Calu3 (cell line): ENCODE measurements at regions of chr2 and their contacts with region 1.

Region 1: DNA sequence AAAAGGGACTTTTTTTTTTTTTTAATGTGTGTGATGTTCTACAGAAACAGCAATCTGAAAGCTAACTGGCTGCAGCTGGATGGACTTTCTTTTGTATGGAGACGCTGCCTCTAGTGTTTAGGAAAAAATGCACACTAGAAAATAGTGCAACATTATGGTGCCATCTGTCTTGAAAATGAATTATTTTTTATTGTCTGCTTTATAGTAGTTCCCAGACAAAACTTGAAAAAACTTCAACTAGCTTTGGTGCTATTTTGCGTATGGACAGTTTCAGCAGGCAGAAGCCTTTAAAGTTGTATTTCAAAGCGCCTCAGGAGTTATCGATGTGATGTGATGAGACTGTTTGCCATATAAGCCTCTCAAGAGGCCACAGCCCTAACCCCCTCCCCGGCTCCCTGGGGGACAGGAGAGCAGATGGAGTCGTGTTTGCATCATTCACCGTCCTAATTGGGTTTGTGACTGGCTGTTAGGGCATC is 86.9 kb downstream of the LTBP1 start:
- DNase-seq: peak; percentile 10
- H3K4me3 Mint-ChIP-seq: no peak overlapping the region
- H3K27ac Mint-ChIP-seq: no peak overlapping the region
- H3K4me1 Mint-ChIP-seq: no peaks in the 10 kb centered on the region
- H3K27me3 Mint-ChIP-seq: no peaks in the 10 kb centered on the region
- CTCF ChIP-seq: no peak

Region 2: GRCh38 chr2:32553829-32554432 is 479.7 kb before region 1 on chr2:
- CTCF ChIA-PET with region 1: interaction called, 4 read pairs
- intact Hi-C with region 1: loop called (anchors 5 kb)
- DNase-seq: peak; percentile 2
- H3K4me3 Mint-ChIP-seq: no peak overlapping the region
- H3K27ac Mint-ChIP-seq: no peak overlapping the region
- H3K4me1 Mint-ChIP-seq: no peaks in the 10 kb centered on the region
- H3K27me3 Mint-ChIP-seq: no peaks in the 10 kb centered on the region
- CTCF ChIP-seq: no peak

Region 3: DNA sequence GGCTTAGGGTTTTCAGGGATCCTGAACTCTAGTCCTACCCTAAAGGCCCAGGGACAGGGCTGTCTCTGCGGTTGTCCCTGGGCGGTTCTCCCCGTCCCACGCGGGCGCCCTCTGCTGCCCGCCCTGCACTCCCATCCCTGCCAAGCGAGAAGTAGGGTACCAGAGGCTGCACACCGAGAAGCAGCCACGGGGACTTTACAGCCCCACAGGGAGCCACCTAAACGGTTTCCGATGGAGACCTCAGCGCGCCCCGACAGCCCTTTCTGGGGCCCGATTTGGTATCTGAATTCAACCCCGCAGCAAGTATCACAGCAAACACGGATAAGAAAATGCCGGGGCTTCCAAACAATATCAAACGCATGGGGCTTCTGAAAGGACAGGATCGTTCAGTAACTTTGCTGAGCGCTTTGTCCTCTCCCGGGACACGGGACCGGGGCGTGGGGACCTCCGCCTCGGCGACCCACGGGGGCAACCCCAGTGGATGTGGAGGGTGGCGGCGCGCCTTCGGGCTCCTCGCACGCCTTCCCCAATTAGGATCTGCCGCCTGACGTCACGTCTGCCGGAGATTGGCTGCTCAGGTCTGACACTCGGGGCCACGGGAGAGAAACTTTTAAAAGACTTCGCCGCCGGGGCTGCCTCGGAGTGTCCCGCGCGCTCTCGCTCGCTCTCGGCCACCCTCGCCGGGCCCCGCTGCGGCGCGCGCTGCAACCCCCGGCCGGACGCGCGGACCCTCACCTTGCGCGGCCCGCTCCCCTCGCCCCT is 87.1 kb before region 1 on chr2 and contains the start of gene LTBP1:
- CTCF ChIA-PET with region 1: interaction called, 5 read pairs
- intact Hi-C with region 1: loop called (anchors 2 kb)
- DNase-seq: peak; percentile 81
- H3K4me3 Mint-ChIP-seq: peak within 1 kb of the TSS; percentile 75
- H3K27ac Mint-ChIP-seq: no peak within 1 kb of the TSS
- H3K4me1 Mint-ChIP-seq: peaks cover 22% of the 10 kb centered on the region
- H3K27me3 Mint-ChIP-seq: no peaks in the 10 kb centered on the region
- CTCF ChIP-seq: peak; percentile 68
- total RNA-seq, gene LTBP1: 12.8 and 13.9 TPM in 2 replicates

Region 4: DNA sequence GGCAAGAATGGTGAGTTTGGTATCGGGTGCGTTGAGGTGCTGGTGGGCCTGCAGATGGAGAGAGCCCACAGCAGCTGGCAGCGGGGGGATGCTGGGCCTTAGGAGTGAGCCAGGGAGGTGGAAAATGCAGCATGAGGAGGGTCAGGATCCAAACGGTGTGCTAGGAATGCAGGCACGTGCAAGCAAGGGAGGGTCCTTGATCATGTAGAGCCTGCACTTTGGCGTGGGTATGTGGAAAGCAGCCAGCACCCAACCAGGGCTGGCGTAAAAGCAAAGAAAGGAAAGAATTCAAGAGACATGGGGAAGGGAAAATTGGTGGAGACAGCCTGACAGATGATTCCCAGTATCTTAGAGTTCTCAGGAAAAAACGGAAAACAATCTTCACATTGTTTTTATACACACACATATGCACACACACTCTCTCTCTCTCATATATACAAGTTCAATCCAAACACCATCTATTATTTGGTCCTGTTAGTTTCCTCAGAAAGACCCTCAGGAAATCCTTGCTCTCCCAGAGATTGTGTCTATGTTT is 40.6 kb before region 1 on chr2:
- CTCF ChIA-PET with region 1: no interaction called
- intact Hi-C with region 1: no loop called
- DNase-seq: no peak
- H3K4me3 Mint-ChIP-seq: no peak overlapping the region
- H3K27ac Mint-ChIP-seq: no peak overlapping the region
- H3K4me1 Mint-ChIP-seq: no peaks in the 10 kb centered on the region
- H3K27me3 Mint-ChIP-seq: peaks cover 13% of the 10 kb centered on the region
- CTCF ChIP-seq: no peak

Region 5: GRCh38 chr2:33275689-33276444 is 242.2 kb after region 1 on chr2:
- CTCF ChIA-PET with region 1: no interaction called
- intact Hi-C with region 1: loop called (anchors 2 kb)
- DNase-seq: peak; percentile 89
- H3K4me3 Mint-ChIP-seq: peak overlapping the region; percentile 31
- H3K27ac Mint-ChIP-seq: peak overlapping the region; percentile 98
- H3K4me1 Mint-ChIP-seq: peaks cover 40% of the 10 kb centered on the region
- H3K27me3 Mint-ChIP-seq: no peaks in the 10 kb centered on the region
- CTCF ChIP-seq: no peak

Region 6: GRCh38 chr2:33441235-33441810 is 407.7 kb after region 1 on chr2:
- CTCF ChIA-PET with region 1: interaction called, 4 read pairs
- intact Hi-C with region 1: loop called (anchors 2 kb)
- DNase-seq: peak; percentile 49
- H3K4me3 Mint-ChIP-seq: no peak overlapping the region
- H3K27ac Mint-ChIP-seq: no peak overlapping the region
- H3K4me1 Mint-ChIP-seq: no peaks in the 10 kb centered on the region
- H3K27me3 Mint-ChIP-seq: no peaks in the 10 kb centered on the region
- CTCF ChIP-seq: peak; percentile 44